Gastrocnemius medialis (tissue), 4 donors: ENCODE measurements at regions of chr2 and their contacts with region 1.

Region 1: DNA sequence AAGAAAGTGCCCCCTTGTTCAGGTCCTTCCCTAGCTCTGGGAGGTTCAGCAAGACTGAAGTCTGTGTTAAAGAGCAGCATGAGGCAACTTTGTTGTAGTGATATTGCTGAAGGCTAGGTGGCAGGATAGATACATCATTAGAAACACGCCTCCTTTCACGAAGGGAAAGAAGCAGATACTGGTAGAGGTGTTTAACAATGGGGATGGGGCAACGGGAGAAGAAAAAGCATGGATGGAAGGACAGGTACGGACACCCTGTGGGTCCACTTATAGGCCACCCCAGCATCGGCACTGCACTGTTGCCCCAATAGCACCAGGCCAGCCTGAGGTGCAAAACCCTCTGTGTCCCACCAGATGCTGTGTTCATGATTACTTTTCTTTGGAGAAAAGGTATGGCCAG is 3.5 kb upstream of the IGFBP5 start:
- DNase-seq: no peak
- ATAC-seq: peak; percentile 62 to 66
- H3K4me3 ChIP-seq: no peak overlapping the region
- H3K27ac ChIP-seq: peak overlapping the region; percentile 69 to 75 (median 74)
- H3K4me1 ChIP-seq: peaks cover 66 to 68% of the 10 kb centered on the region in 2 donors
- H3K27me3 ChIP-seq: no peaks in the 10 kb centered on the region
- CTCF ChIP-seq: peak; percentile 63 to 81 (median 67)
- POLR2A ChIP-seq: no peak

Region 2: GRCh38 chr2:216350214-216350789 is 348.6 kb before region 1 on chr2:
- in situ Hi-C with region 1: no loop called
- intact Hi-C with region 1: no loop called
- DNase-seq: no peak
- ATAC-seq: no peak
- H3K4me3 ChIP-seq: no peak overlapping the region
- H3K27ac ChIP-seq: no peak overlapping the region
- H3K4me1 ChIP-seq: no peaks in the 10 kb centered on the region
- H3K27me3 ChIP-seq: no peaks in the 10 kb centered on the region
- CTCF ChIP-seq: no peak
- POLR2A ChIP-seq: no peak

Region 3: DNA sequence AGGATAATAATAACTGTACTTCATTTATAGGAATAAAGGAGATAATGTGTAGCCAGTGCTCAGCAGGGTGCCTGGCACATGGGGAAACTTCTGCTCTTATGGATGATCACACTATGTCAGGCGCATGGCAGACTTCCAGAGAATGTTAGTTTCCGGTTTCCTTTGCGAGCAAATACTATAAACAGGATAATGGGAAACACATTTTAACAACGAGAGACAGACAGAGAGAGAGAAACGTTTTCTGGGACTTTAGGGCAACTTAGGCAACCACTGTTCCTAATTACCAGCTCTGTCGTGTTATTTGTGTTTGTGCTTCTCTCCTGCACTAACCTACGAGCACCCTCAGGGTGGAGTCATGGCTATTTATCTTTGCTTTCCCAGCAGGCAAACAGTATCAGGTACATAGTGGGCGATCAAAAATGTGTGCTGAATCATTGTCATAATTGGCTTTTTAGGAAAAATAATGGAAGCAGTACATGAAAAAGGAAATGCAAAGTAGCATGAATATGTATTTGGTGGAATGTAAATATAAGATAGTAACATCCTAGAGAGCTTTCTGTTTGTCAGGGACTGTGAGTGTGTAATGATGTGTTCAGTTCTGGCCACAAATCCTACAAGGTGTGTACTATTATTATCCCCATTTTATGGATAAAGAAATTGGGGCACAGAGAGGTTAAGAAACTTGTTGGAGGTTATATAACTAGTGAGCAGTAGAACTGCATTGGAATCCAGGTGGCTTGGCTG is 102.5 kb before region 1 on chr2:
- in situ Hi-C with region 1: no loop called
- intact Hi-C with region 1: no loop called
- DNase-seq: no peak
- ATAC-seq: peak in 1 of 2 donors; percentile 19
- H3K4me3 ChIP-seq: no peak overlapping the region
- H3K27ac ChIP-seq: no peak overlapping the region
- H3K4me1 ChIP-seq: peaks cover 7 to 8% of the 10 kb centered on the region in 2 donors
- H3K27me3 ChIP-seq: no peaks in the 10 kb centered on the region
- CTCF ChIP-seq: no peak
- POLR2A ChIP-seq: no peak

Region 4: GRCh38 chr2:216632952-216633615 is 65.8 kb before region 1 on chr2 and contains the start of gene IGFBP2:
- in situ Hi-C with region 1: no loop called
- intact Hi-C with region 1: no loop called
- DNase-seq: no peak
- ATAC-seq: peak; percentile 18 to 23
- H3K4me3 ChIP-seq: peak within 1 kb of the TSS; percentile 56 to 61 (median 58)
- H3K27ac ChIP-seq: peak within 1 kb of the TSS in 3 of 4 donors; percentile 19 to 55 (median 27)
- H3K4me1 ChIP-seq: peaks cover 4 to 14% of the 10 kb centered on the region in 2 donors
- H3K27me3 ChIP-seq: peaks cover 37 to 41% (median 37%) of the 10 kb centered on the region in 3 donors
- CTCF ChIP-seq: no peak
- POLR2A ChIP-seq: peak in 1 of 2 donors; percentile 10
- total RNA-seq, gene IGFBP2: 14.3 to 44.4 (median 23.6) TPM

Region 5: DNA sequence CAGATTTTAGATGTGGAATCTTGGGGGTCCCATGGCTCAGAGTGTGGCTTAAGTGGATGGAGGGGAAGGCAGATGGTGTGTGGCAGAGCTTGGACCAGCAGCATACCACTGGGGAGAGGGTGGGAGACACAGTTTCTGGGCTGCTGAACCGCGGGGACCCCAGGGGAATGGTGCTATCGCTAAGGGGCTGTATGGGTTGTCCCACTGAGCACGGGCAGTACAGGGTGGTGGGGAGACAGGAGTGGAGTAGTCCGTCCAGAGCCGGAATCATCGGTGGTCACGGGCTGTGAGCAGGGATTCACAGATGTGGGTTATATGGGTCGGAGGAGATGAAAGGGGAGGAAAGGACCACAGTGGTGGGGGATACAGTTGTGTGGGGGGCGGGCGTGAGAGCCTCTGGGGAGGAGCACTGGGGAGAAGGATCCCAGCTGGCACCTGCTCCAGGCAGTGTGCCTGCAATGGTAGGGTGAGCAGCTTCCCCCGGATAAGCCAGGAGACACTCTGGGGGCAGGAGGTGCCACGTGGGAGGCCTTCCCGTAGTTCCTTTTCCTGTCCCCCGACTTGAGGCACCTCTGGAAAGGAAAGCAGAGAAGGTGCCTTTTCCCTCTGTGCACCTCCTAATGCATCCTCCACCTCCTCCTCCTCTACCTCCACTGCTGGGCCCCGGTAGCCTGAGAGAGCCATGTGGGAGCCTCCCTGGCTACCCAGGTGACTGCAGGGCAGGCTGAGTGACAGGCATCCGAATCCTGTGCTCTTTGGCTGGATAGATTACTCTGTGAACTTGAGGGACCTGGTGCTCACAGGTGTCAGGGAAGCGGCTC is 28.4 kb before region 1 on chr2:
- in situ Hi-C with region 1: no loop called
- intact Hi-C with region 1: no loop called
- DNase-seq: no peak
- ATAC-seq: peak; percentile 18 to 20
- H3K4me3 ChIP-seq: no peak overlapping the region
- H3K27ac ChIP-seq: peak overlapping the region in 3 of 4 donors; percentile 25 to 57 (median 56)
- H3K4me1 ChIP-seq: peaks cover 0 to 3% of the 10 kb centered on the region in 2 donors
- H3K27me3 ChIP-seq: no peaks in the 10 kb centered on the region
- CTCF ChIP-seq: no peak
- POLR2A ChIP-seq: no peak

Region 6: DNA sequence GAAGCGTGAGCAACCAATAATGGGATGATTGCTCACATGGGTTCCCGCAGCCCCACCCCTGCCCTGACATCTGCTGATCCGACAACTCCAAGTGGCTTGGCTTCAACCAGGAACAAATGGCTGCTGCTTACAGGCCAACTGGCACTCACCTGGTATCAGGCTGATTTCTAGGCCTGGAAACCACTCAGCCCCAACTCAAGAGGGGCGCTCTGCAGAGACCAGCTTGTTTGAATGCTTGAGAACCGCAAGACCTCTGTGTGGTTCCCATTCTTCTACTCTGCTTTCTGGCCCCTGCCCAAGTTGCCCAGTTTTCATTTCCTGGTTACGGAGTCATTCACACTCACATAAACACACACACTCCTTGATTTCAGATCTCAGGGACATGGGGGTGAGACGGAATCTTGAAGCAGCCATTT is 109.0 kb after region 1 on chr2:
- in situ Hi-C with region 1: loop called (anchors 5 to 10 kb)
- intact Hi-C with region 1: loop called (anchors 1 kb)
- DNase-seq: peak; percentile 74 to 83
- ATAC-seq: peak in 1 of 2 donors; percentile 14
- H3K4me3 ChIP-seq: no peak overlapping the region
- H3K27ac ChIP-seq: peak overlapping the region; percentile 78 to 98 (median 86)
- H3K4me1 ChIP-seq: peaks cover 53 to 62% of the 10 kb centered on the region in 2 donors
- H3K27me3 ChIP-seq: no peaks in the 10 kb centered on the region
- CTCF ChIP-seq: no peak
- POLR2A ChIP-seq: no peak

Region 7: DNA sequence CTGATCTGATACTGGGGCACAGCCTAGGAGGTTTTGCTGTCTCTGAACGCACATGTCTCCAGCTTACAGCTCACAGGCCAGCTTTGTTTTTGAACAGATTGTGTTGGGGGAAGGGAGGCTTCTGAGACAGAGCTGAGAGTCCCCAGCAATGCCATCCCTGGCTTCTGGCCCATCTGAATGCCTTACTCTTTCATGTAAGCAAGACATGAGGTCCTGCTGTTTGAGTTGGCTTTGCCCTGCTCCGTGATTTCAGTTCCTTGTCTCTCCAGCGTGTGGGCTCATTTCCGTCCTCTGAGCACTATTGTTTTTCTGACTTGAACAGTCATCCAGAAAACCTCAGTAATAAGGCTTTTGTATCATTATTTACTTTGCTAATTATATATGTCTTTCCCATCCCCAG is 355.9 kb after region 1 on chr2:
- in situ Hi-C with region 1: no loop called
- intact Hi-C with region 1: loop called (anchors 5 kb)
- DNase-seq: no peak
- ATAC-seq: no peak
- H3K4me3 ChIP-seq: no peak overlapping the region
- H3K27ac ChIP-seq: no peak overlapping the region
- H3K4me1 ChIP-seq: peaks cover 9 to 20% of the 10 kb centered on the region in 2 donors
- H3K27me3 ChIP-seq: no peaks in the 10 kb centered on the region
- CTCF ChIP-seq: no peak
- POLR2A ChIP-seq: no peak

Region 8: DNA sequence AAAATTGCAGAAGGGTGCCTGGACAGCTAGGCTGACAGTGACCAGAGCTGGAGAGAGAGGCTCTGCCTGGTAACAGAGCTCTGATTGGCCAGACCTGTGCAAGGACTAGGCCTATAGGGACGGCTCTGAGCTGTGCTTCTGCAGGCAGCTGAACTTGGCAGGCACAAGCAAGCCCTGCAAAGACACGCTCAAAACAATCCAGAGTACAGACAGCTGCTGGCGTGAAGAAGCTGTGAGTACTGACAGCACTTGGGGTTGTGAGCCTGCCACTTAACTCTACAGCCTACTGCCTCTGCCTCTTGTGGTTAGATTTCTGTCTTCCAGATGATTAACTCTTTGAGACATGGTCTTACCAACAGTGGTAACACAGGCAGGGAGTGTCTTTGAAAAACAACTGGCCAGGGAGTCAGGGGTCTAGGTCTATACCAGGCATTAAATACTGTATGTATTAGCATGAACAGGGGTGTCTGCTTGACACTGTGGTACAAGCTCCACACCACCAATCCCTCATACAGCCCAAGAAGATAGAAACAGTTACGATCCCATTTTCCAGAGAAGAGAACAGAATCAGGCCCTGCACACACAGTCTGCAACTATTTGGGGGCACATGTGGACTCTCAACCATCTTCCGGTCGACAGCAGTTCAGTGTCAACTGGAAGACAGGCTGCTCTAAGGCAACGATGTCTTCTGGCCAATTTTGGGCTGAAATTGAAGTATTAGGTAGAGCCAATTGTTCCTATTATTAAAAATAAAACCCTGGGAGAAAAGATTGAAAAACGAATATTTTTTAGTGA is 735.5 kb after region 1 on chr2:
- in situ Hi-C with region 1: no loop called
- intact Hi-C with region 1: loop called (anchors 5 kb)
- DNase-seq: peak; percentile 92
- ATAC-seq: peak; percentile 99 to 100
- H3K4me3 ChIP-seq: peak overlapping the region in 3 of 4 donors; percentile 13 to 31 (median 29)
- H3K27ac ChIP-seq: peak overlapping the region; percentile 52 to 69 (median 60)
- H3K4me1 ChIP-seq: peaks cover 31 to 50% of the 10 kb centered on the region in 2 donors
- H3K27me3 ChIP-seq: no peaks in the 10 kb centered on the region
- CTCF ChIP-seq: no peak
- POLR2A ChIP-seq: peak in 1 of 2 donors; percentile 7

Region 9: GRCh38 chr2:217510771-217511291 is 811.9 kb after region 1 on chr2:
- in situ Hi-C with region 1: loop called in 1 of 4 experiments (anchors 5 kb)
- intact Hi-C with region 1: loop called (anchors 2 kb)
- DNase-seq: peak; percentile 25 to 60
- ATAC-seq: peak; percentile 96 to 98
- H3K4me3 ChIP-seq: no peak overlapping the region
- H3K27ac ChIP-seq: no peak overlapping the region
- H3K4me1 ChIP-seq: no peaks in the 10 kb centered on the region
- H3K27me3 ChIP-seq: no peaks in the 10 kb centered on the region
- CTCF ChIP-seq: peak; percentile 51 to 72 (median 69)
- POLR2A ChIP-seq: no peak

Region 10: GRCh38 chr2:217643789-217644301 is 945.0 kb after region 1 on chr2:
- in situ Hi-C with region 1: loop called in 1 of 4 experiments (anchors 25 kb)
- intact Hi-C with region 1: loop called (anchors 10 kb)
- DNase-seq: peak; percentile 39 to 59
- ATAC-seq: peak; percentile 59 to 65
- H3K4me3 ChIP-seq: no peak overlapping the region
- H3K27ac ChIP-seq: peak overlapping the region in 3 of 4 donors; percentile 25 to 58 (median 56)
- H3K4me1 ChIP-seq: peaks cover 11 to 36% of the 10 kb centered on the region in 2 donors
- H3K27me3 ChIP-seq: no peaks in the 10 kb centered on the region
- CTCF ChIP-seq: no peak
- POLR2A ChIP-seq: no peak

Region 11: DNA sequence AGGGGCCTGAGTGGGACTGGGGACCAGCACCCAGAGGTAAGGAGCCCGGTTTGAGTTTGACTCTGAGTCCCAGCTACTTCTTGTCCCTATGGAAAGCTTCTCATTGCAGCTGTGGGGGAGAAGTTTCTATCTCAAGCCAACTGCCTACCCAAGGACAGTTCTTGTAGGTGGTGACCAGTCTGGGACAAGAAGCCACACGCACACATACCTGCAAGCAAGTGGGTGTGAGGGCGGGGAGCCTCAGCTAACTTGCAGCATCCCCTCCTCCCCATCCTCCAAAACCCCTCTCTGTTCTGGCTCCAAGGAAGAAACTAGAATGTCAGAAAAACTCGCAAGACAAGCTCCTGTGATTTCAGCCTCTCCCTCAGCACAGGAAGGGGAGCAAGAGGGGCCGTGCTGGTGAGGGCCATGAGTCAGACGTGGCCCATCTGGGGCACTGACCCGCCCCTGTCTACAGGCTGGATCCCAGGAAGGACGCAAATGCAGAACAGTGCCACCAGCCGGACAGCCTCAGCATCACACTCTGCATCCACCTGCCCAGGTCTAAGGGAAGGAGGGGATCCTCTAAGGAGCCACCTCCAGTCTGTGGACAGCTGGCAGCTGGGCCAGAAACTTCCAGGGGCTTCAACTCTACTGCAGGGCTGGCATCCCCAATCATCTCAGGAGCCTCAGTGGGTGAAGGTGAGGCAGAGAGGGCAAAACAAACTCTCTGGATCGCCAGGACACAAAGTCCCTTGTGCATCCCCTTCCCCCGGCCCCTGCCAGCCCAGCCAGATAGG is 1200.5 kb after region 1 on chr2:
- in situ Hi-C with region 1: no loop called
- intact Hi-C with region 1: loop called (anchors 10 kb)
- DNase-seq: peak; percentile 64 to 88
- ATAC-seq: peak in 1 of 2 donors; percentile 12
- H3K4me3 ChIP-seq: no peak overlapping the region
- H3K27ac ChIP-seq: peak overlapping the region; percentile 87 to 94 (median 92)
- H3K4me1 ChIP-seq: peaks cover 73 to 74% of the 10 kb centered on the region in 2 donors
- H3K27me3 ChIP-seq: no peaks in the 10 kb centered on the region
- CTCF ChIP-seq: peak; percentile 60 to 86 (median 71)
- POLR2A ChIP-seq: peak in 1 of 2 donors; percentile 50